Uterus (tissue), 4 donors: ENCODE measurements at regions of chrX and their contacts with region 1.

Region 1: DNA sequence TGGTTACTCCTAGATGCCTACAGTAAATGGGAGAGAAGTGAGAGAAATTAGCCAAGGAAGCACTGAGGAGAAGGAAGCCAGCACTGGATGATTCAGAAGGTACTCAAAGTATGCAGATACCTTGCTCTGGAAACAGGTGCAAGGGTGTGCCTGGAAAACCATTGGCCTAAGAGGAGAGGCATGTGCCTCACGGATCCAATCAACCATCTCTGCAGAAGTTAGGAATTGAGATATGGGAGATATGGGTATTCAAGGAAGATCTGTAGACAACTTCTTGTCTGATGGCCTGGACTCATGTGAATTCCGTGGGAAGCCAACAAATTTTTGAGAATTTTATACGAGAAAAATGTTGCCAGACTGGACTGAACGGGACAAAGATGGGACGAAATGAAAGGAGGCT is 4.7 kb downstream of the H2BW1 start:
- DNase-seq: no peak
- H3K4me3 ChIP-seq: no peak overlapping the region
- H3K27ac ChIP-seq: no peak overlapping the region
- H3K4me1 ChIP-seq: no peaks in the 10 kb centered on the region
- H3K27me3 ChIP-seq: no peaks in the 10 kb centered on the region
- CTCF ChIP-seq: no peak
- POLR2A ChIP-seq: no peak

Region 2: DNA sequence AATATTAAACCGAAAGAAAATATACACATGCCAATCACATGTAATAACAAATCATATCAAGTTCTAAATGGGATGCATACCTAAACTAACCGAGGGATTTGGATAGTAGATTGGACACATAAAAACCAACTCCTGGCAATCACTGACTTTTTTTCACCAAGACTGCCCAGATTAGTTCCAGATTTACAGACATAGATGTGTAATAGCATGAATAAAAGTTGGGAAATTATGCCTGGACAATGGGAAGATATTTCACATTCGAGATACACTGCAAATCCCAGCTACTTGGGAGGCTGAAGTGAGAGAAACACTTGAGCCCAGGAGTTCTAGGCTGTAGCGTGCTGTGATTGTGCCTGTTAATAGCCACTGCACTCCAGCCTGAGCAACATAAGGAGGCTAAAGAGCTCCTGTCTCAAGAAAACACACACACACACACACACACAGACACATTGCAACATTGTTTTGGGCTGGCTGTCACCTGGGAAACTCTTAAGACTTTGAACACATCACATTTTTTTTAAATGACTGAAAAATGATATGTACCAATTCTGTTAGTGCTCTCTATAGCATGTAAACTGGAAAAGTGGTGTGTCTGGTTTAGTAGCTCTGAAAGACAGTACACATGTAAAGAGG is 495.2 kb before region 1 on chrX:
- intact Hi-C with region 1: no loop called
- DNase-seq: no peak
- H3K4me3 ChIP-seq: no peak overlapping the region
- H3K27ac ChIP-seq: no peak overlapping the region
- H3K4me1 ChIP-seq: no peaks in the 10 kb centered on the region
- H3K27me3 ChIP-seq: no peaks in the 10 kb centered on the region
- CTCF ChIP-seq: no peak
- POLR2A ChIP-seq: no peak

Region 3: GRCh38 chrX:103918581-103919269 is 90.1 kb before region 1 on chrX:
- intact Hi-C with region 1: loop called (anchors 2 kb)
- DNase-seq: peak; percentile 54 to 59
- H3K4me3 ChIP-seq: peak overlapping the region; percentile 37 to 46
- H3K27ac ChIP-seq: peak overlapping the region; percentile 85 to 86
- H3K4me1 ChIP-seq: no peaks in the 10 kb centered on the region
- H3K27me3 ChIP-seq: no peaks in the 10 kb centered on the region
- CTCF ChIP-seq: no peak
- POLR2A ChIP-seq: peak; percentile 5 to 21

Region 4: DNA sequence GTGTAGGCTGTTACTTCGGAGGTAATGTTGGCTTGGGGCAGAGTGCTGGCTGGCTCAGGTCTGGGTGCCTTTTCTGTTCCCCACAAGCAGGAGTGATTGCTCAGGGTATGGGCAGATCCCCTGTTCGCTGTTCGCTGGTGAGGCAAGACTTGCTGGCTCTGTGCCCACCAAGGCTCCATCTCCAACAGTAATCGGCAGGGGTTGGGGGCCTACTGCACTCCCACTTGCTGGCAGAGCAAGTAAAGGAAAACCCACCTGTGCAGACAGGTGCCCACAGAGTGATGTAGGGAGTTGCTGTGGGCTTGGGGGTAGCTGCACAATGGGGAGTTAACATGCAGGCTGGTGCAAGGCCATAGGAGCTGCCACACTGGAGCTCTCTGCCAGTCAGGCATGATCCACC is 75.2 kb after region 1 on chrX:
- intact Hi-C with region 1: no loop called
- DNase-seq: no peak
- H3K4me3 ChIP-seq: no peak overlapping the region
- H3K27ac ChIP-seq: no peak overlapping the region
- H3K4me1 ChIP-seq: no peaks in the 10 kb centered on the region
- H3K27me3 ChIP-seq: no peaks in the 10 kb centered on the region
- CTCF ChIP-seq: no peak
- POLR2A ChIP-seq: no peak